Ascending aorta (tissue), 2 donors: ENCODE measurements at regions of chr19 and their contacts with region 1.

Region 1: GRCh38 chr19:2494444-2495129 is 18.7 kb downstream of the GADD45B start:
- DNase-seq: peak; percentile 69 to 95
- H3K4me3 ChIP-seq: peak overlapping the region; percentile 45 to 68
- H3K27ac ChIP-seq: peak overlapping the region; percentile 84 to 94
- H3K4me1 ChIP-seq: peaks cover 7 to 19% of the 10 kb centered on the region in 2 donors
- H3K27me3 ChIP-seq: no peaks in the 10 kb centered on the region
- CTCF ChIP-seq: no peak

Region 2: DNA sequence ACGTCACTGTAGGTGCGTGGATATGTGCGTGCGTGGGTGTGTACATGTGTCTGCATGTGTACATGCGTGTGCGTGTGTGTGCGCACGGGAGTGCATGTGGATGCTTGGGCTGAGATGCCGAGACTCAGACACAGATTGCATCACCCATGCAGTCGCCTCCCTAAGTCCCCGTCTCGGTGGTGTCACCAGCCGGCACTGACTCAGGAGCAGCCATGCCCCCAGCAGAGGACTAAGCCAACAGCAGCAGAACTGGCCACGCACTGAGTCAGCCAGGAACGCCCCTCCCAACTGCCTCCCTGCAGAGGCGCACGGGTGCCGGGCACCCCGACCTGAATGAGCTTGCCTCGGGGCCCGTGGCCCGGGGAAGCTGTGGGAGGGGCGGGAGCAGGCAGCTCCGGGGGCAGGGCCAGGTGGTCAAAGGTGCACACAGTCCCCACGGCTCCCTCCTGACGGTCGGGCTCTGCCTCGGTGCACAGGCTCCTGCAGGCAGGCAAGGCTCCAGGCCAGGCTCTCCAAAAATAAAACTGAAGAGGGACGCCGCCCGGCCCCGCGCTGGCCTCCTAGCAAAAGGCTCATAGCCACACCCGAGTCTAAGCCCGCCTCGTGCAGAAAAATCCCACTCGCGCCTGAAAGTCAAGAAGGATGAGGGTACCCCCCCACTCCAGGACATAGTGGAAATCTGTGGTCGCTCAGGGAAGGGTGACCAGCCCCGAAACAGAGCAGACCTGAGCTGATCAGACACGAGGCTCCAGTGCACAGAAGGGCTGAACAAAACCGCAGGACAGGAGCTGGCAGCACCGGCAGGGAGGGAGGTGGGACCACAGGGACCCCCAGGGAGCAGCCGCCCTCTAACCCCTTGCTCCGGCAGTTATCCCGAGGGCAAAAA is 30.5 kb after region 1 on chr19:
- intact Hi-C with region 1: loop called (anchors 2 kb)
- DNase-seq: peak; percentile 65 to 86
- H3K4me3 ChIP-seq: peak overlapping the region; percentile 28 to 55
- H3K27ac ChIP-seq: peak overlapping the region; percentile 63 to 76
- H3K4me1 ChIP-seq: peaks cover 7 to 21% of the 10 kb centered on the region in 2 donors
- H3K27me3 ChIP-seq: no peaks in the 10 kb centered on the region
- CTCF ChIP-seq: no peak

Region 3: DNA sequence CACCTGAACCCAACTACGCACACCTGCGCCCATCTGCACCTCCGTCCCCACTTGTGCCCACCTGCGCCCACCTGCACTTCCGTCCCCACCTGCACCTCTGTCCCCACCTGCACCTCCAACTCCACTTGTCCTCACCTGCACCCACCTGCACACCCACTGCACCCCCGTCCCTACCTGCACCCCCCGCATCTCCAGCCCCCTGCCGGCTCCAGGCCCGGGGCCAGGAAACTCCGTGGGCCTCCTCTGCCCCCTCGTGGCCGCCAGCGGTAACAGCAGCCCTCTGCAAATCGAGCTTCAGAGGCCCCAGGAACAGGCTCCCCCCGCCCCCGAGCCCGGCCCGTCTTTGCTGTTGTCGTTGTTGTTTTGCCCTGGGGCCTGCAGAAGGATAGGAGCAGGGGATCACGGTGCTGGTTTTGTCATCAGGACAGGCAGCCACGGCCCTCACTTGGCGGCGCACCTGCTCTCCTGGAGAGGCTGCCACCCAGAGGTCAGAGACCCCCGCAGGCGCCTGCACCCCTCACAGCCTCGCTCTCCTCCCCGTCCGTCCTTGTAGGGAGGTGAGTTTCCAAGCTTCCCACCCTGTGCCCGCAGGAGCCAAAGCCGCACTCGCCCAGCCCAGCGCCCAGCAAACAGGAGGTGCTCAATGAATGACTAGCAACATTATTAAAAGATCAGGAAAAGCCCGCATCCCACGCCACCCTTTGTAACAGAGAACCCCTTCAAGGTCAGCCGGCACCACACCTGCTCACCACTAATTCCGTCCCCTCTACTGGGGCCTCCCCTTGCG is 142.5 kb after region 1 on chr19:
- intact Hi-C with region 1: no loop called
- DNase-seq: no peak
- H3K4me3 ChIP-seq: peak overlapping the region in 1 of 2 donors; percentile 32
- H3K27ac ChIP-seq: no peak overlapping the region
- H3K4me1 ChIP-seq: peaks cover 15 to 23% of the 10 kb centered on the region in 2 donors
- H3K27me3 ChIP-seq: no peaks in the 10 kb centered on the region
- CTCF ChIP-seq: peak; percentile 87 to 98 (median 94)